AG04450 (cell line): ENCODE measurements at regions of chr15 and their contacts with region 1.

Region 1: GRCh38 chr15:90154861-90155626 is 46.1 kb upstream of the SEMA4B start:
- DNase-seq: peak; percentile 84
- H3K4me3 ChIP-seq: no peak overlapping the region
- H3K27ac ChIP-seq: peak overlapping the region; percentile 58
- H3K27me3 ChIP-seq: no peaks in the 10 kb centered on the region
- CTCF ChIP-seq: no peak

Region 2: GRCh38 chr15:90138071-90138833 is 16.8 kb before region 1 on chr15:
- CTCF ChIA-PET with region 1: no interaction called
- POLR2A ChIA-PET with region 1: no interaction called
- DNase-seq: no peak
- H3K4me3 ChIP-seq: no peak overlapping the region
- H3K27ac ChIP-seq: no peak overlapping the region
- H3K27me3 ChIP-seq: no peaks in the 10 kb centered on the region
- CTCF ChIP-seq: no peak

Region 3: GRCh38 chr15:90291679-90292356 is 136.8 kb after region 1 on chr15:
- CTCF ChIA-PET with region 1: no interaction called
- POLR2A ChIA-PET with region 1: no interaction called
- DNase-seq: no peak
- H3K4me3 ChIP-seq: no peak overlapping the region
- H3K27ac ChIP-seq: no peak overlapping the region
- H3K27me3 ChIP-seq: peaks cover 2% of the 10 kb centered on the region
- CTCF ChIP-seq: no peak

Region 4: GRCh38 chr15:90512981-90513380 is 357.9 kb after region 1 on chr15:
- CTCF ChIA-PET with region 1: no interaction called
- POLR2A ChIA-PET with region 1: interaction called, 14 read pairs
- DNase-seq: no peak
- H3K4me3 ChIP-seq: no peak overlapping the region
- H3K27ac ChIP-seq: no peak overlapping the region
- H3K27me3 ChIP-seq: no peaks in the 10 kb centered on the region
- CTCF ChIP-seq: no peak